IMR-90 (cell line): ENCODE measurements at regions of chr11 and their contacts with region 1.

Region 1: GRCh38 chr11:72075109-72075508 is 5.2 kb downstream of the NUMA1 start:
- DNase-seq: no peak
- ATAC-seq: no peak
- H3K4me3 ChIP-seq: no peak overlapping the region
- H3K27ac ChIP-seq: peak overlapping the region; percentile 2; the same call in 1 of the 2 replicates
- H3K4me1 ChIP-seq: peaks cover 15% of the 10 kb centered on the region
- H3K27me3 ChIP-seq: no peaks in the 10 kb centered on the region
- CTCF ChIP-seq: 0 out of 2 replicates have a peak, but pooled peaks have one; percentile 15
- POLR2A ChIP-seq: no peak
- RAD21 ChIP-seq: no peak

Region 2: GRCh38 chr11:71971680-71972079 is 103.4 kb before region 1 on chr11:
- CTCF ChIA-PET with region 1: no interaction called
- POLR2A ChIA-PET with region 1: no interaction called
- dilution Hi-C with region 1: no loop called
- in situ Hi-C with region 1: no loop called
- intact Hi-C with region 1: no loop called
- DNase-seq: no peak
- ATAC-seq: no peak
- H3K4me3 ChIP-seq: no peak overlapping the region
- H3K27ac ChIP-seq: no peak overlapping the region
- H3K4me1 ChIP-seq: 0 out of 2 replicates have a peak, but pooled peaks cover 2% of the 10 kb centered on the region
- H3K27me3 ChIP-seq: no peaks in the 10 kb centered on the region
- CTCF ChIP-seq: no peak
- POLR2A ChIP-seq: no peak
- RAD21 ChIP-seq: no peak

Region 3: GRCh38 chr11:72040726-72041441 is 34.2 kb before region 1 on chr11:
- CTCF ChIA-PET with region 1: interaction called, 3 read pairs
- POLR2A ChIA-PET with region 1: interaction called, 3 read pairs
- dilution Hi-C with region 1: no loop called
- in situ Hi-C with region 1: loop called (anchors 5 kb)
- intact Hi-C with region 1: loop called (anchors 1 kb)
- DNase-seq: peak; percentile 95
- ATAC-seq: peak; percentile 67
- H3K4me3 ChIP-seq: peak overlapping the region; percentile 76
- H3K27ac ChIP-seq: peak overlapping the region; percentile 95
- H3K4me1 ChIP-seq: peaks cover 10% of the 10 kb centered on the region
- H3K27me3 ChIP-seq: no peaks in the 10 kb centered on the region
- CTCF ChIP-seq: no peak
- POLR2A ChIP-seq: peak; percentile 67; the same call in 1 of the 2 replicates
- RAD21 ChIP-seq: peak; percentile 15; the same call in 1 of the 2 replicates